Left ventricle myocardium inferior (tissue), 1 donor: ENCODE measurements at regions of chr12 and their contacts with region 1.

Region 1: DNA sequence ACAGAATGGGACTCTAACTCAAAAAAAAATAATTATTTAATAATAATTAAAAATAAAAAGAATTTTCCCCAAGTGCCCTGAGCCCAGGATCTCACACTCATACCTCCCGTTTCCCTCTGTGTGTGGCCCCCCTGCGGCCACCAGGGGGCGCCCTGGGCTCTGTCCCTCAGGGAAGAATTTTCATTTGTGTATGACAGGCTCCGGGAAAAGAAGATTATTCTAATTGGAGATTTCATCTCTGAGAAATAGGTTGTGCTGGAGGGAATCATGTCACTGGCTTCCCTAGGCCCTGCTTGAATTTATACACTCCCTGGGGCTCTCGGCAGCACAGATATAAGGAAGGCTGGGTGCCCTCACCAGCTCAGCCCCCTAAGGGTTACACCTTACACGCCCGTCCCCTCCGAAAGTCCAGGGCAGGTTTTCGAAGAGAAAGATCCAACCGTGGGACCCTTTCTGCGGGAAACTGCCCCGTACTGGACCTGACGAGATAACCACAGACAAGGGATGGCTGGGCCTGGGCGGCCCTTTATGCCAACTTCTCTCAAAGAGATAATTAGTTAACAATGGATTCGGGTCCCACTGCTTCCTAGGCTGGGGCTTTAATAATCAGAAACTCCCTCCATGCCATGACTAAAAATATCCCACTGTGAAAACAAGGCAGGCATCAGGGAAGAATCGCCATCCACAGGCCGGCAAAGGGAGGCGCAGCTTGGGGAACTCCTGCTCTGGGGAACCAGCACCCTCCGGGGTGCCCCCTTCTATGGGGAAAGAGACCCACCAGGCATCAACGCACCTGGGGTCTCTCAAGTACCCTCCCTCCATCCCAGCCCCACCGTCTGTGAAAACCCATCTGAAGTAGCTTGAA is 80.7 kb downstream of the KDM2B start:
- DNase-seq: peak; percentile 83
- H3K4me3 ChIP-seq: peak overlapping the region; percentile 54
- H3K27ac ChIP-seq: peak overlapping the region; percentile 84
- H3K4me1 ChIP-seq: peaks cover 25% of the 10 kb centered on the region
- H3K27me3 ChIP-seq: no peaks in the 10 kb centered on the region
- CTCF ChIP-seq: peak; percentile 98

Region 2: GRCh38 chr12:121279507-121279915 is 220.7 kb before region 1 on chr12:
- intact Hi-C with region 1: no loop called
- DNase-seq: peak; percentile 70
- H3K4me3 ChIP-seq: peak overlapping the region; percentile 6
- H3K27ac ChIP-seq: peak overlapping the region; percentile 74
- H3K4me1 ChIP-seq: peaks cover 41% of the 10 kb centered on the region
- H3K27me3 ChIP-seq: no peaks in the 10 kb centered on the region
- CTCF ChIP-seq: no peak

Region 3: GRCh38 chr12:121536899-121537813 is 37.0 kb after region 1 on chr12:
- intact Hi-C with region 1: loop called (anchors 5 kb)
- DNase-seq: peak; percentile 90
- H3K4me3 ChIP-seq: peak overlapping the region; percentile 89
- H3K27ac ChIP-seq: peak overlapping the region; percentile 100
- H3K4me1 ChIP-seq: peaks cover 67% of the 10 kb centered on the region
- H3K27me3 ChIP-seq: no peaks in the 10 kb centered on the region
- CTCF ChIP-seq: no peak

Region 4: GRCh38 chr12:121678716-121679580 is 178.8 kb after region 1 on chr12:
- intact Hi-C with region 1: loop called (anchors 5 kb)
- DNase-seq: no peak
- H3K4me3 ChIP-seq: no peak overlapping the region
- H3K27ac ChIP-seq: no peak overlapping the region
- H3K4me1 ChIP-seq: no peaks in the 10 kb centered on the region
- H3K27me3 ChIP-seq: no peaks in the 10 kb centered on the region
- CTCF ChIP-seq: no peak

Region 5: DNA sequence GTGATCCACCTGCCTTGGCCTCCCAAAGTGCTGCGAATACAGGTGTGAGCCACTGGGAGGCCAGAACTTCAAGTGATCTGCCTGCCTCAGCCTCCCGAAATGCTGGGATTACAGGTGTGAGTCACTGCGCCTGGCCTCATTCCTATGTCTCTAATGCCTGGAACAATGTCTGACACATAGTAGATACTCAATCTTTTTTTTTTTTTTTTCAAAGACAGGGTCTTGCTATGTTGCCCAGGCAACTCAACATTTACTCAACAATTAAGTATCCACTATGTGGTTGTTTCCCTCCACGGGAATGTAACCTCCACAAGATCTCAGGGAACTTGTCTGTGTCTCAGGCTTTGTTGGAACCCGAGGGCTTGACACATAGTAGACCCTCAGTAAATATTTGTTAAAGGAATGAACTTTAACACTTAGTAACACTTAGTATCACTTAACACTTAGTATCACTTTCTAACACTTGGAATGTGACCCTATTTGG is 209.4 kb after region 1 on chr12:
- intact Hi-C with region 1: no loop called
- DNase-seq: no peak
- H3K4me3 ChIP-seq: no peak overlapping the region
- H3K27ac ChIP-seq: no peak overlapping the region
- H3K4me1 ChIP-seq: peaks cover 31% of the 10 kb centered on the region
- H3K27me3 ChIP-seq: no peaks in the 10 kb centered on the region
- CTCF ChIP-seq: no peak